ENCODE measurements at regions of chr2 and their contacts with region 1.

Region 1: GRCh38 chr2:38377050-38377828 is at the start of gene ATL2:
- DNase-seq: peak; percentile 53
- H3K4me3 ChIP-seq: peak within 1 kb of the TSS; percentile 86
- CTCF ChIP-seq: peak; percentile 0

Region 2: DNA sequence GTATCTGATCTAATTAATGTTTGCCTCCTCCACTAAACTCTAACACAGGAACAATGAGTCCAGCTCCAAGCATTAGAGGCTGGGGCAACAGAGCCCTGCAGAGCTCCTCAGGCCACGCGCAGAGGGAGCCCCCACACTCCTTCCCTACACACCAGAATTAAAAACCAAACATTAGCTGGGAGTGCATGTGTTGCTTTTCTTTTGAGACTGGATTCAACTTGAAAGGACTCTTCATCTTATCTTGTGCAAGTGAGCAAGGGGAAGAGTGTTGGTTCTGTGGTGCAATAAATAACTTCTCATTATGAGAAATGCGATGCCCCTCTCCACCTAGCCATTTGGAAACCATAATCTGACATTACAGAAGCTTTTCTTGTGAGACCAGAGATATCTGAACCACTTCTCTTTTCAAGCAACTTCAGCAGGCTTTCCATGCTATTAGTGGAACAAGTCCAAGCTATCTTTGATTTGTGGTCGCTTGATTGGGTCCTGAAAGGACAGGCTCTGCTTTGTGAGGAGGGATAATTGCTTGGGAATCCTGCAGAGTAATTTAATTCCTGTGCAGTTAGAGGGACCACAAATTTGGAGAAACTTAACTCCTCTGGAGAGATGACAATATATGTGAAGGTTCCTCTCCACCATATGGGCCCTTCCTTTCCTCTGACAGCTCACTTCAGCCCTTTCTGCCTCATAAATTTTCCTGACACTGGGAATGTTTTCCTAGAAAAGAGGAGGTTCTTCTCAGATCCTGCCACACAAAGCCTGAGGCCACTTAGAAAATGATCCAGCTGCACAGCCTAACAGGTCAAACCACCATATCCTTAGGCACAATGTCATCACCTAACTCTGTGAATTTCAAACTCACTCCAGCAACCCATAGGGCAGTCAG is 112.6 kb before region 1 on chr2:
- CTCF ChIA-PET with region 1: no interaction called
- POLR2A ChIA-PET with region 1: no interaction called
- DNase-seq: no peak
- H3K4me3 ChIP-seq: no peak overlapping the region
- CTCF ChIP-seq: no peak

Region 3: GRCh38 chr2:38352336-38352735 is 24.9 kb before region 1 on chr2:
- CTCF ChIA-PET with region 1: interaction called, 15 read pairs
- POLR2A ChIA-PET with region 1: interaction called, 3 read pairs
- DNase-seq: no peak
- H3K4me3 ChIP-seq: no peak overlapping the region
- CTCF ChIP-seq: no peak

Region 4: DNA sequence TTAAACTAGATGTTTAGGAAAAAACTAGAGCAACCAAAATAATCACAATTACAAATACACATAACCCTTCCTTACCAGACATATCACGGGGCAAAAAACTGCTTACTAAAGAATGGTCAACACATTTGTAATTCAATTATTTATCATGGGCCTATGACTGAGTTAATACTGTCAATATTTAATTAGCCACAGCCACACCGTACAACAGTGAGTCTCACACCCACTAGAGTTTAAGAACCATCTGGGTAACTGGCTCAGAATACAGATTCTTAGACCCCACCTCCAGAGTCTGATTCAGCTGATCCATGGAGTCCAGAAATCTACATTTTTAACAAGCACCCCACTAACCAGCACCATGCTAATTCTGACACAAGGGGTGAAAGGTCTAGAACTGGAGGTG is 15.0 kb before region 1 on chr2:
- CTCF ChIA-PET with region 1: interaction called, 35 read pairs
- POLR2A ChIA-PET with region 1: no interaction called
- DNase-seq: no peak
- H3K4me3 ChIP-seq: no peak overlapping the region
- CTCF ChIP-seq: no peak

Region 5: GRCh38 chr2:39124000-39124745 is 746.9 kb after region 1 on chr2:
- CTCF ChIA-PET with region 1: no interaction called
- POLR2A ChIA-PET with region 1: no interaction called
- DNase-seq: peak; percentile 68
- H3K4me3 ChIP-seq: peak overlapping the region; percentile 80
- CTCF ChIP-seq: peak; percentile 68

Region 6: DNA sequence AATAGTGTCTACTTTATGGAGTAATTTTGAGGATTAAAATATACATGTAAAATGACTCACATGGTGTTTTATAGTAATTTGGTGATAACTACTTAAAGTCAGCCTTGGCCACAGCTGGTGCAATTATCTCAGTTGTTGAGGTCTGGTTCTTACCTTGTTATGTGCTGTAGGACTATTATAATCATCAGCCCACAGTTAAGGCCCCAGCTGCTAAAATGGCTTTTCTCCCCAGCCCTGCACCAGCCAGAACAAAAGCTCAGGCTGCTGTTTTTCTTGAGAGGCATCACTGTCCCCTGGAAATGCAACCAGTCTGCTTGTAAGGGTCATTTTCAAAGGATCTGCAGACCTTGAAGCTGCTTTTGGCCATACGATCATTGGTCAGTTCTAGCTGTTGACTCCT is 1685.1 kb after region 1 on chr2:
- CTCF ChIA-PET with region 1: no interaction called
- POLR2A ChIA-PET with region 1: no interaction called
- DNase-seq: no peak
- H3K4me3 ChIP-seq: no peak overlapping the region
- CTCF ChIP-seq: no peak

Measured in AG04449 (cell line).